ENCODE measurements at regions of chr15 and their contacts with region 1.

Region 1: GRCh38 chr15:58517682-58518525 is 86.1 kb downstream of the LIPC start:
- DNase-seq: peak; percentile 47 to 48
- ATAC-seq: peak; percentile 58 to 75 (median 75)
- H3K4me3 ChIP-seq: no peak overlapping the region
- H3K4me3 Mint-ChIP-seq: peak overlapping the region; percentile 37
- H3K27ac ChIP-seq: peak overlapping the region; percentile 93
- H3K27ac Mint-ChIP-seq: peak overlapping the region; percentile 89 to 91
- H3K4me1 ChIP-seq: peaks cover 52% of the 10 kb centered on the region
- H3K4me1 Mint-ChIP-seq: peaks cover 73 to 89% of the 10 kb centered on the region in 2 donors
- H3K27me3 ChIP-seq: no peaks in the 10 kb centered on the region
- H3K27me3 Mint-ChIP-seq: no peaks in the 10 kb centered on the region
- CTCF ChIP-seq: no peak

Region 2: GRCh38 chr15:58269455-58270414 is 248.2 kb before region 1 on chr15:
- intact Hi-C with region 1: loop called (anchors 5 kb)
- DNase-seq: peak in 1 of 2 donors; percentile 68
- ATAC-seq: peak; percentile 80 to 97 (median 91)
- H3K4me3 ChIP-seq: no peak overlapping the region
- H3K4me3 Mint-ChIP-seq: no peak overlapping the region
- H3K27ac ChIP-seq: no peak overlapping the region
- H3K27ac Mint-ChIP-seq: peak overlapping the region; percentile 50 to 75
- H3K4me1 ChIP-seq: peaks cover 8% of the 10 kb centered on the region
- H3K4me1 Mint-ChIP-seq: peaks cover 11 to 13% of the 10 kb centered on the region in 2 donors
- H3K27me3 ChIP-seq: no peaks in the 10 kb centered on the region
- H3K27me3 Mint-ChIP-seq: peaks cover 2 to 8% of the 10 kb centered on the region in 2 donors
- CTCF ChIP-seq: peak; percentile 76

Region 3: GRCh38 chr15:58331903-58332675 is 185.8 kb before region 1 on chr15:
- intact Hi-C with region 1: loop called (anchors 5 kb)
- DNase-seq: peak; percentile 79 to 87
- ATAC-seq: peak; percentile 92 to 99 (median 98)
- H3K4me3 ChIP-seq: no peak overlapping the region
- H3K4me3 Mint-ChIP-seq: peak overlapping the region; percentile 76
- H3K27ac ChIP-seq: peak overlapping the region; percentile 82
- H3K27ac Mint-ChIP-seq: peak overlapping the region; percentile 92 to 95
- H3K4me1 ChIP-seq: peaks cover 29% of the 10 kb centered on the region
- H3K4me1 Mint-ChIP-seq: peaks cover 34 to 40% of the 10 kb centered on the region in 2 donors
- H3K27me3 ChIP-seq: no peaks in the 10 kb centered on the region
- H3K27me3 Mint-ChIP-seq: no peaks in the 10 kb centered on the region
- CTCF ChIP-seq: no peak

Region 4: GRCh38 chr15:58475573-58476524 is 42.1 kb before region 1 on chr15:
- intact Hi-C with region 1: loop called (anchors 1 kb)
- DNase-seq: peak in 1 of 2 donors; percentile 18
- ATAC-seq: peak in 1 of 3 donors; percentile 28
- H3K4me3 ChIP-seq: no peak overlapping the region
- H3K4me3 Mint-ChIP-seq: peak overlapping the region; percentile 78
- H3K27ac ChIP-seq: no peak overlapping the region
- H3K27ac Mint-ChIP-seq: peak overlapping the region; percentile 88 to 91
- H3K4me1 ChIP-seq: peaks cover 68% of the 10 kb centered on the region
- H3K4me1 Mint-ChIP-seq: peaks cover 61 to 74% of the 10 kb centered on the region in 2 donors
- H3K27me3 ChIP-seq: no peaks in the 10 kb centered on the region
- H3K27me3 Mint-ChIP-seq: no peaks in the 10 kb centered on the region
- CTCF ChIP-seq: no peak

Region 5: GRCh38 chr15:58545307-58546065 is 27.6 kb after region 1 on chr15:
- intact Hi-C with region 1: loop called (anchors 2 kb)
- DNase-seq: peak; percentile 30 to 48
- ATAC-seq: peak; percentile 79 to 96 (median 90)
- H3K4me3 ChIP-seq: no peak overlapping the region
- H3K4me3 Mint-ChIP-seq: peak overlapping the region; percentile 80
- H3K27ac ChIP-seq: peak overlapping the region; percentile 19
- H3K27ac Mint-ChIP-seq: peak overlapping the region; percentile 90 to 94
- H3K4me1 ChIP-seq: peaks cover 28% of the 10 kb centered on the region
- H3K4me1 Mint-ChIP-seq: peaks cover 34 to 48% of the 10 kb centered on the region in 2 donors
- H3K27me3 ChIP-seq: no peaks in the 10 kb centered on the region
- H3K27me3 Mint-ChIP-seq: no peaks in the 10 kb centered on the region
- CTCF ChIP-seq: no peak

Region 6: DNA sequence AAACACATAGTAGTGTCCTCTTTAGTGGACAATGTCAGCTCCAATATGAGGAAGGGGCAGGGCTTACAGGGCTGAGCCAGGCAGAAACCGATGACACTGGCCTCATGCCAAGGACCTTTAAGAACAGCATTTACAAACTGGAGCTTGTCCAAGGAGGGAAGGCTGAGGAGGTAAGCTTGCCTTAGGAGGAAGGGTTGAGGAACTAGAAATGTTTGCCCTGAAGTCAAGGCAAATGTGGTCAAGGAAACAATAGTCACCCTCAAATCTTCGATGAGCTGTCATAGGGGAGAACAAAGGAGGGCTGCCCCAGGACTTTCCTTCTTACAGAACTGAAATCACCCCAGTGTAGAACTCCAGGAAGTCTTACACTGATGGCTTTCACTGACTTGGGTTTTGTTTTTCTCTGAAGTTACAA is 50.3 kb after region 1 on chr15:
- intact Hi-C with region 1: no loop called
- DNase-seq: no peak
- ATAC-seq: peak in 1 of 3 donors; percentile 34
- H3K4me3 ChIP-seq: no peak overlapping the region
- H3K4me3 Mint-ChIP-seq: no peak overlapping the region
- H3K27ac ChIP-seq: no peak overlapping the region
- H3K27ac Mint-ChIP-seq: peak overlapping the region; percentile 53 to 61
- H3K4me1 ChIP-seq: no peaks in the 10 kb centered on the region
- H3K4me1 Mint-ChIP-seq: peaks cover 9 to 18% of the 10 kb centered on the region in 2 donors
- H3K27me3 ChIP-seq: no peaks in the 10 kb centered on the region
- H3K27me3 Mint-ChIP-seq: no peaks in the 10 kb centered on the region
- CTCF ChIP-seq: no peak

Region 7: GRCh38 chr15:58770857-58771620 is 253.1 kb after region 1 on chr15 and contains the start of gene MINDY2:
- intact Hi-C with region 1: loop called (anchors 1 kb)
- DNase-seq: peak; percentile 89 to 97
- ATAC-seq: peak; percentile 92 to 99 (median 94)
- H3K4me3 ChIP-seq: peak within 1 kb of the TSS; percentile 99
- H3K4me3 Mint-ChIP-seq: no peak within 1 kb of the TSS
- H3K27ac ChIP-seq: peak within 1 kb of the TSS; percentile 92
- H3K27ac Mint-ChIP-seq: peak within 1 kb of the TSS; percentile 87 to 96
- H3K4me1 ChIP-seq: peaks cover 16% of the 10 kb centered on the region
- H3K4me1 Mint-ChIP-seq: peaks cover 10 to 14% of the 10 kb centered on the region in 2 donors
- H3K27me3 ChIP-seq: no peaks in the 10 kb centered on the region
- H3K27me3 Mint-ChIP-seq: no peaks in the 10 kb centered on the region
- CTCF ChIP-seq: no peak
- total RNA-seq, gene MINDY2: 16.3 to 18.7 (median 18.3) TPM